ENCODE measurements at regions of chr2 and their contacts with region 1.

Region 1: DNA sequence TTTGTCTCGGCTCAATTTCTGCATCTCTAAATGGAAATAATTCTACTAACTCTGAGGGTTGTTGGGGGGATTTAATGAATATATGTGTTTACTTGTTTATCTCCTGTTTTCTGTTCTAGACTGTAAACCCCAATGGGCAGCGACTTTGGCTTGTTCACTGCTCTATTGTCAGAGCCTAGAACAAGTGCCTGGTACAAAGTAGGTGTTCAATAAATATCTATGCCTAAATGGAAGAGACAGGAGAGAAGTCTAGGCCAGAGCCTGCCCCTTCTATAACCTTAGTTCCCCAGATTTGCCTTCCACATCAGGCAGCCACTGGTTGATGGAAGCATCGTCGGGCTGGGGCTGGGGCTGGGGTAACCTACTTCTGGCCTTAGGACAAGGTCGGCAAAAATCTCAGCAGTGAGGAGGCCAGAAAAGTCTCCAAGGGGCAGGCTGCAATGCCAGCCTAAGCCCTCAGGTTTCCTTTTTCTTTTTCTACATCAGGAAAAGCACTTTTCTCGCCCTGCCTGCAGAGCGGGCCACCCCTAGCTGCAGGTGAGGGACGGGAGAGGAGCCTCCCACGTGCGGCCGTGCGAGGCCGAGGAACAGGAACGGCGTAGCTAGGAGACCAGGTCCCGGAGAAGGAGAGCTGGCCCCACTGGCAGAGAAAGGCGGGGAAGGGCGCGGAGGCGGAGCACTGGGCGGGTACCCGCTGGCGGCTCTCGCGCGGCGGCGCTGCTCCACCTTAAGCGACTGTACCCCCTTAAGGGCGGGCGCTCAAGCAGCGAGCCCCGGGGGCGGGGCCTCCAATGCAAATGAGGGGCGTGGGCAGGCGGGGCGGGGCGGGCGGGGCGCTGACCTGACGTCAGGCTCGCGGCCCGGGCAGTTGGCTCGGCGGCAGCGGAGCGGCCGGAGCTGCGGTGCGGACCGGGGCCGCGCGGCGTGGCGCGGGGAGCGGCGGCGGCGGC is at the start of gene CNNM4:
- DNase-seq: peak; percentile 88 to 98 (median 96)

Region 2: GRCh38 chr2:96260404-96261260 is 499.7 kb before region 1 on chr2:
- intact Hi-C with region 1: no loop called
- DNase-seq: peak in 19 of 42 donors; percentile 23 to 59 (median 38)

Region 3: GRCh38 chr2:96507908-96508520 is 252.3 kb before region 1 on chr2:
- intact Hi-C with region 1: no loop called
- DNase-seq: peak; percentile 63 to 90 (median 78)

Region 4: DNA sequence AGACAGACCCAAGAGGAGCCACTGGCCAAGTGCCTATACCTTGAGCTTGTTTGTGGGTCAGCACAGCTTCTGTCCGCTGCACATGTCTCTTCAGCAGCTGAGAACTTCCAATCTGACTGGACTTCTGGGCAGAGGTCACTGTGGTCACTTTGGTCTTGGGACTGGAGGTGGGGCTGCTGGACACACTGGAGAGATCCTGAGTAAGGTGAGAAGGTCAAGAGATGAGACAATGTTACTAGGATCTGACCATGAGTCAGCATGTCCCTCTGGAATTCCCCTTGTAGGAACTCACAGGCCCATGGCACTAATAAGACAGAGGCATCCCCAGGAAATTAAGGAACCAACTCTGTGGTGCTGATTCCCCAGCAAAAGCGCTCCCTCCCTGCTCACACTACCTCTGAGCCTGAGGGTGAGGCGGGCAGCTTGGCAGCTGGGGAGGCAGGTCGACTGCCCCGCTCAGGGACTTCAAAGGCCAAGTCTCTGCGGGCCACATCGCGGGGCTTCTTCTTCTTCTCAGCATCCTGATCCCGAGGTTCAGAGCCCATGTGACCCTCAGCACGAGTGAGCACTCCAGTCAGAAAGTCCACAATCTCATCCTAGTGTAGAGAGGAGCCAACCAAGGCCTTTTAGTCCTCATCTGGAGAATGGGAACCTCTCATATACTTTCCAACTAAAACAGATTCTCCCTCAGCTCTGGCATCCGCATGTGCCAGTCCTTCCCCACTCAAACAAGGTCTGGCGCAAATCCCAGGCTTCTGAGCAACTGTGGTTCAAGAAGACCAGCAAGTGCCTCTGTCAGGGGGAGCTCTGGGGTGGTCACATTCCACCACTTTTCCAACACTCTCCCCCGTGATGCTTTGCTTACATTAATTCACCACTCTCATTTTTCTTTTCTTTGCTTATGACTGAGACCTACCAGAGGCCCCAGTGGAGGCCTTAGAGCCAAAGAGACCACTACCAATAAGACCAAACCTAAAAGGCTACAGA is 151.5 kb before region 1 on chr2:
- intact Hi-C with region 1: no loop called
- DNase-seq: peak in 13 of 42 donors; percentile 4 to 52 (median 22)

Region 5: GRCh38 chr2:96638144-96639121 is 121.9 kb before region 1 on chr2 and contains the start of gene KANSL3:
- intact Hi-C with region 1: loop called (anchors 2 kb)
- DNase-seq: peak; percentile 68 to 95 (median 90)

Region 6: GRCh38 chr2:96685577-96686459 is 74.5 kb before region 1 on chr2:
- intact Hi-C with region 1: no loop called
- DNase-seq: no peak

Region 7: GRCh38 chr2:96816128-96816835 is 56.0 kb after region 1 on chr2 and contains the start of gene CNNM3:
- intact Hi-C with region 1: loop called (anchors 5 kb)
- DNase-seq: peak; percentile 89 to 99 (median 98)

Measured in head of caudate nucleus (tissue), 42 donors.